ENCODE measurements at regions of chr6 and their contacts with region 1.

Region 1: DNA sequence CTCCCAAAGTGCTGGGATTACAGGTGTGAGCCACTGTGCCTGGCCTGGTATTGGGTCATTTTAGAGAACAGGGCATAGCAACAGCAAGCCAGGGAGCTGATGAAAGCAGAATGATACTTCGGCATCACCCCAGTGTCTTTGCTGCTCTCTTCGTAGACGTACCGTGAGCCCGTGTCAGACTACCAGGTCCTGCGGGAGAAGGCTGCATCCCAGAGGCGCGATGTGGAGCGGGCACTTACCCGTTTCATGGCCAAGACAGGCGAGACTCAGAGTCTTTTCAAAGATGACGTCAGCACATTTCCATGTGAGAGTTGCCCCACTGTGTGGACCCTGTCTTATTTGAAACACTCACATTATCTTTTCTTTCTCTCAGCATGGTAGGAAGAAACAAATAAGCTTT is 15.8 kb downstream of the TAF8 start:
- DNase-seq: no peak
- ATAC-seq: no peak
- H3K4me3 ChIP-seq: no peak overlapping the region
- H3K4me3 Mint-ChIP-seq: no peak overlapping the region
- H3K27ac ChIP-seq: no peak overlapping the region
- H3K27ac Mint-ChIP-seq: no peak overlapping the region
- H3K4me1 ChIP-seq: no peaks in the 10 kb centered on the region
- H3K4me1 Mint-ChIP-seq: no peaks in the 10 kb centered on the region
- H3K27me3 ChIP-seq: no peaks in the 10 kb centered on the region
- H3K27me3 Mint-ChIP-seq: no peaks in the 10 kb centered on the region

Region 2: DNA sequence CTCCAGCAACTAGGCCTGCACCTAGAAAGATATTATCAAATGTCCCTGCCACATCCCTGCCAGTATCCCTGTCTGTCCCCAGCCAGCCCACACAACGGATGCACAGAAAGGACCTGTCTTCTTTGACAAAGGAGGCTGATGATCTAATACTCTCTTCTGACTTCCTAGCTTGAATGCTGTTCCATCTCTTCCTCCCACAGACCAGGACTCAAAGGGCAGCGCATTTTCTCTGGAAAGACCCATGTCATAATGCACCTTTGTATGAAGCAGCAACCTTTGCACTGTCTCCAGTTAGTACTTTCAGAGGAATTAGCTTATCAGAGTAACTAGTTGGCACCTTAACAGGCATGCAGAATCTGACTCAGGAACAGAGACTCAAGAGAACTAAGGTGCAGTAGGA is 69.2 kb before region 1 on chr6:
- CTCF ChIA-PET with region 1: no interaction called
- POLR2A ChIA-PET with region 1: no interaction called
- DNase-seq: no peak
- ATAC-seq: no peak
- H3K4me3 ChIP-seq: no peak overlapping the region
- H3K4me3 Mint-ChIP-seq: no peak overlapping the region
- H3K27ac ChIP-seq: peak overlapping the region; percentile 3
- H3K27ac Mint-ChIP-seq: peak overlapping the region; percentile 53 to 56
- H3K4me1 ChIP-seq: peaks cover 0 to 30% of the 10 kb centered on the region in 2 experiments
- H3K4me1 Mint-ChIP-seq: peaks cover 43 to 56% (median 50%) of the 10 kb centered on the region in 3 donors
- H3K27me3 ChIP-seq: no peaks in the 10 kb centered on the region
- H3K27me3 Mint-ChIP-seq: no peaks in the 10 kb centered on the region

Region 3: DNA sequence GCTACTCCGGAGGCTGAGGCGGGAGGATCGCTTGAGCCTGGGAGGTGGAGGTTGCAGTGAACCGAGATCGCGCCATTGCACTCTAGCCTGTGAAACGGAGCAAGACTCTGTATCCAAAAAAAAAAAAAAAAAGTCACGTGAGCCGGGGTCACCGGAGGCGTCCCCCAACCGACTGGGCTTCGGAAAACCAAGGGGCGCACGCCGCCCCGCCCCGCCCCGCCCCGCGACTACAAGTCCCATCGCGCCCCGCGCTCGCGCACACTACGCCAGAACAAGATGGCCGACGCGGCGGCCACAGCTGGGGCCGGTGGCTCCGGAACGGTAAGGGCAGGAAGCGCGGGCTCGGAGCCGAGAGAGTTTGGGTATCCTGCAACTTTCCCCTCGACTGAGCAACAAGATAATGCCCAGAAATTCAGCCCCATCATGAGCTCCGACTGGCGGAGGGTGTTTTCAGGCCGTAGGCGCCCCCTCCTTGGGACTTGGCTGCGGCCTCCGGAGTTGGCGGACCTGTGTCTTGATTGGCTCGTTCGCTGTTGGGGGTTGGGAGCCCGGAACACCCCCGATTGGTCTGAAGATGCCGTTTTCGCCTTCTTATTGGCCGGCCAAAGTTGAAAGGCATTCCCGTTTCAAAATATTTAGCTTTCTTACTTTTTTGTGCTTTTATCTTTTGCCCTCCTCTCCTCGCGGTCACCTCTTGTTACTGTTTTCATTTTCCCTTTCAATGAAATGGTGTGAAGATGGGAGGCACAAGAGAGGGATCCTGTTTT is 15.7 kb before region 1 on chr6 and contains the start of gene TAF8:
- CTCF ChIA-PET with region 1: interaction called in 1 of 2 experiments, 4 read pairs
- POLR2A ChIA-PET with region 1: interaction called, 6 to 10 read pairs
- DNase-seq: peak; percentile 76 to 93 (median 84)
- ATAC-seq: peak; percentile 62 to 69 (median 63)
- H3K4me3 ChIP-seq: peak within 1 kb of the TSS; percentile 80 to 98
- H3K4me3 Mint-ChIP-seq: peak within 1 kb of the TSS; percentile 93 to 99 (median 98)
- H3K27ac ChIP-seq: peak within 1 kb of the TSS; percentile 77
- H3K27ac Mint-ChIP-seq: peak within 1 kb of the TSS; percentile 97 to 98
- H3K4me1 ChIP-seq: peaks cover 19 to 59% of the 10 kb centered on the region in 2 experiments
- H3K4me1 Mint-ChIP-seq: peaks cover 60 to 72% (median 61%) of the 10 kb centered on the region in 3 donors
- H3K27me3 ChIP-seq: no peaks in the 10 kb centered on the region
- H3K27me3 Mint-ChIP-seq: no peaks in the 10 kb centered on the region
- total RNA-seq, gene TAF8: 46.0 to 55.5 (median 47.6) TPM

Measured in T-cell (primary cell).